ENCODE measurements at regions of chr3 and their contacts with region 1.

Region 1: DNA sequence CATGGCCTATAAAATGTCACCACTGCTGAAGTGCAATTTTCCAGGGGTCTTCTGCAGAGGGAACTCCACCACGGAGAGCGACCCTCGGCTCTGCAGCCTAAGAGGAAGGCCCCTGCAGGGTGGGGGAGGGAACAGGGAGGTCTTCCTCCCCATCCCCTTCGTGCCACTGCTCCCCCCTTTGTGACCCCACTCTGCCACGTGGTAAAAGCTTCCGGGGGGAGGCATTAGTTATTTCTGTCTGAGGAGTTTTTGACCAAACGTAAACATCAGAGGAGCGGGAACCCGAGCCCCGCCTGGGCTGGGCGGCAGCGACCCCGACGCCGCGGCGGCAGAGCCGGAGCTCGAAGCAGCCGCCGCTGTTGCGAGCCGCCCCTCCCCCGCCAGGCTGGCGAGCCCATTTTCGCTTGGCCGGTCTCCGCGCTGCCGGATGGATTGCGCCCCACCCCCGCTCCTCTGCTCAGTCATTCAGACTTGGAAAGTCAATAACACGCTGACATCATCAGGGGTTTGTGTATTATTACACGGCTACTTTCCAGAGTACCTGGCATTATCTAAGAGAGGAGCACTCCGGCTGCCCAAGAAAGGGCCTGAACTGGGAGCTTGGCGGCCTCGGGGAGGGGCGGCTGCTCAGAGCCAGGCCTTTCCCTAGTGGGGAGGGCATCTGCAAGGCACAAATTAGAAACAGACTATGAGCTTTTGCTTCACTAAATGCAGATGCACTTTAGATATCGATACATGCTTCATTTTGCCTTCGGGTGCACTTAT is 162.5 kb upstream of the TBL1XR1 start:
- DNase-seq: peak; percentile 98
- ATAC-seq: peak; percentile 94

Region 2: GRCh38 chr3:177041021-177041729 is 318.6 kb before region 1 on chr3:
- intact Hi-C with region 1: loop called (anchors 10 kb)
- DNase-seq: peak; percentile 45
- ATAC-seq: peak; percentile 94

Region 3: DNA sequence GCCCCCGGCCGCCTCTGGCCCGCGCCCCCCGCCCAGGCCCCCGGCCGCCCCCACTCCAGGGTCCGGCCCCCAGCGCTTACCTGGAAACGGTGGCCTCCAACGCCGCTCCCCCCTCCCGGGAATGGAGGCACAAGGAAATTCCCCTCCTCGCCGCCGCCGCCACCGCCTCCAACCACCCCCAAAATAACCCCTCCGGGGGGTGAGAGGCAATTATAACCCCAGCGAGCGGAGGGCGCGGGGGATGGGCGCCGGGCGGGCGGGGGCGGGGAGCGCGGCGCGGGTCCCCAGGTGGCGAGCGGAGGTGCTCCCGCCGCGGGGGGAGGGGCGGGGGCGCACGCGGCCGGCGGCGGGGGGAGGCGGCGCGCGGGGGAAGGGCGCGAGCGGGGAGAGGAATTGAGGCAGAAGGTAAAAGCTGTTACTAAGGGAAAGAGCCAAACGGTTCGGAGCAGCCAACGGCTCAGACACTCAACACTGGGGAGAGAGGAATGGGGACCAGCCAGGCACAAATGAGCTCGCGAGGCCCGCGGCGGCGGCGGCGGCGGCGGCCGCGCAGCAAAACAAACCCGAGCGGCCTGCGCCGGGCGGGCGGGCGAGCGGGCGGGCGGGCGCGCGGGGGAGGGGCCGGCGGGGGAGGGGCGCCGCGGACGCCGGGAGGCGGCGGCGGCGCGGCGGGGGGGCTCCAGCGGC is 162.6 kb before region 1 on chr3 and contains the start of gene TBL1XR1:
- intact Hi-C with region 1: loop called (anchors 2 kb)
- DNase-seq: peak; percentile 93
- ATAC-seq: peak; percentile 88
- total RNA-seq, gene TBL1XR1: 90.8 TPM

Region 4: DNA sequence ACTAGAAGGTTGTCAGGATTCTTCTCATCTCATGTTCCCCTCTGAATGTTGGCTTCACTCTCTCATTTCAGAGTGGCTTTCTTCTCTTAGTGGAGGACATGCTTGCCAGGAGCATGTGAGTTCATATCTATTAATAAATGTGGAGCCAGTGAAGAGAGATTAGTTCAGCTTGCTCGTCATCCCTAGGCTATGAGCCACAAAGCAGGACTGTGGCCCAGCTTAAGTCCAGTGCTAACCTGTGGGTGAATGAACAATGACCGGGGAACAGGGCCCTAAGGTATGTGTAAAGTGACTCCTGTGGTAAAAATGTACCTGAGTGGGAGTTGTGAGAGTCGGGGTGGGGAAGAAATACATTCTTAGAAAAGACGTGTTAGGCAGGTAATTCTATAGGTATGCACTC is 65.6 kb before region 1 on chr3:
- intact Hi-C with region 1: loop called (anchors 10 kb)
- DNase-seq: peak; percentile 51
- ATAC-seq: peak; percentile 91

Region 5: DNA sequence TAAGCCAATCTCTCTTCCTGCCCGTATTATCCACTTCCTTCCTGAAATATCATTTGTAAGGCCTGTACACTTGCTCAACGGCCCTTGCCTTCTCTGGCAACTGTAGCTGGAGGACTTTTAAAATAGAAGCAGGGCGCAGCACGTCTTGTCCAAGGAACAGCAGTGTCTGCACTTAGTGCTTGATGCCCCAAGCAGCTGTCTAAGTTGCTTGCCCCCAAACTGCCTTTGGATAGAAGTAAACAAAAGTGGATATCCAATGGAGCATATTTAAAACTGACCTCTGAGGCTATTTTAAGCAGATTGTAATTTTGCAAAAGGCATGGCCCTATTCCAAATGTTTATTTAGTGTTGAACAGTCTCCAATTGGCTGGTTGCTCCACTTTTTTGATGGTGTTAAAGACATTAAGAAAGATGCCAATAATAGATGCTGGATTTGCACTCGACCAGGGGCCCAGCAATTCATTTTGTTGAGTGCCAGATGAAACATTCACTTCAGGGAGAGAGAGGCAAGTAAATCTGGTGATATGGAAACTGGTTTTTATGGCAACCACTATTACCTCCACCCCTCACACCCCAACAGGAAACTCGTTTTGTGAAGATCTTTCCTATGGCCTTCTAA is 364.4 kb after region 1 on chr3:
- intact Hi-C with region 1: loop called (anchors 10 kb)
- DNase-seq: peak; percentile 80
- ATAC-seq: peak; percentile 94

Region 6: GRCh38 chr3:177777699-177778098 is 417.9 kb after region 1 on chr3:
- intact Hi-C with region 1: loop called (anchors 10 kb)
- DNase-seq: peak; percentile 40
- ATAC-seq: no peak